K562 (cell line): ENCODE measurements at regions of chr12 and their contacts with region 1.

Region 1: DNA sequence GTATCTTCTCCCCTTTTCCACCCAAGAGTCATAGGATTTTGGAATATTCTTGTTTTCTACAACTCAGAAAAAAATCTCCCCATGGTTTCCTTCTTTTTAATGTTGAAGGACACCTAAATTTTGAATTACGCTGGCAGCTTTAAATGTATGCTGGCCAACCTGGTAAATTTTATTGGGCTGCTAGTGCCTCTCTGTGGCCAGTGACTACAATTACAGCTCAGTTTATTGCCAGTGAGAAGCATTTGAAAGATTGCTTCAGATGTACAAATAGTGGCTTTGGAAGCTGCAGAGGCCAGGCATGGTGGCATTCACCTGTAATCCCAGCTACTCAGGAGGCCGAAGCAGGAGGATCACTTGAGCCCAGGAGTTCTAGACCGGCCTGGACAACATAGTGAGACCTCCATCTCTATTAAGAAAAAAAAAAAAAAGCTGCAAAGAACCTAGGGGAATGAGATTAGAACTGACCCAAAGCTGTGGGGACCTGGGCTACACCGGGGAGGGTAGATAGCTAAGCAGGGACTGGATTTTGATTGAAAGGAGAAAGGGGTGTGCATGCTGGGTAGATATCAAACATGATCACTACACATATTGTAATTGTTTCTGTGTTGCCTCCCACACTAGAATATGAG is 7.6 kb upstream of the RAB21 start:
- DNase-seq: peak in 3 of 4 experiments; percentile 28 to 73 (median 45)
- ATAC-seq: peak; percentile 84
- H3K4me3 ChIP-seq: no peak overlapping the region
- H3K27ac ChIP-seq: no peak overlapping the region
- H3K4me1 ChIP-seq: peaks cover 3 to 10% of the 10 kb centered on the region in 2 experiments; a peak in 2 of 5 replicates
- H3K27me3 ChIP-seq: no peaks in the 10 kb centered on the region
- CTCF ChIP-seq: peak; percentile 69 to 89 (median 77)
- EP300 ChIP-seq: no peak
- POLR2A ChIP-seq: no peak
- RAD21 ChIP-seq: peak; percentile 88 to 91

Region 2: DNA sequence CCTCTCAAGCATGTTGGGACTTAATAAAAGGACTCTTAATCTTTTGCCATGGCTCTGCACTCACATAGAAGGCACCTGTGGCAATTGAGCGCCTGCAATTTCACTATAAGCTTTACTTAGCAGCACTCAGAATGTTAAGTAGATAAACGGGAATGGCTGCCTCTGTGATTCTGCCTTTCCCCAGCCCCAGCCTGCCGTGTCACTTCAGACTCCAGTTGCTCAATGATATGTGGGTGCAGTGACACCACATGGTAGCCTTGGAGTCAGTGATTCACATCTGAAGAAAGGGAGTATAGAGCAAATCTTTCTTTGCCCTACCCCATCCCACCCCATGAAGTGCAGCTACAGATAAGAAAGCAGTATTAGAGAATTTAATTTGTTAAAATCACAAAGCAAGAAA is 179.6 kb before region 1 on chr12:
- CTCF ChIA-PET with region 1: no interaction called
- POLR2A ChIA-PET with region 1: no interaction called
- in situ Hi-C with region 1: no loop called
- intact Hi-C with region 1: loop called (anchors 5 kb)
- DNase-seq: peak; percentile 18 to 74 (median 31)
- ATAC-seq: peak; percentile 95
- H3K4me3 ChIP-seq: no peak overlapping the region
- H3K27ac ChIP-seq: no peak overlapping the region
- H3K4me1 ChIP-seq: peaks cover 0 to 10% of the 10 kb centered on the region in 2 experiments; a peak in 4 of 5 replicates
- H3K27me3 ChIP-seq: no peaks in the 10 kb centered on the region
- CTCF ChIP-seq: peak; percentile 39 to 50 (median 48); a peak in 5 of 6 replicates
- EP300 ChIP-seq: no peak
- POLR2A ChIP-seq: no peak
- RAD21 ChIP-seq: peak; percentile 54 to 58

Region 3: GRCh38 chr12:71599210-71599609 is 147.9 kb before region 1 on chr12:
- CTCF ChIA-PET with region 1: no interaction called
- POLR2A ChIA-PET with region 1: no interaction called
- in situ Hi-C with region 1: no loop called
- intact Hi-C with region 1: no loop called
- DNase-seq: no peak
- ATAC-seq: no peak
- H3K4me3 ChIP-seq: no peak overlapping the region
- H3K27ac ChIP-seq: no peak overlapping the region
- H3K4me1 ChIP-seq: peaks cover 2 to 4% of the 10 kb centered on the region in 2 experiments; a peak in 3 of 5 replicates
- H3K27me3 ChIP-seq: no peaks in the 10 kb centered on the region
- CTCF ChIP-seq: no peak
- EP300 ChIP-seq: no peak
- POLR2A ChIP-seq: no peak
- RAD21 ChIP-seq: no peak

Region 4: DNA sequence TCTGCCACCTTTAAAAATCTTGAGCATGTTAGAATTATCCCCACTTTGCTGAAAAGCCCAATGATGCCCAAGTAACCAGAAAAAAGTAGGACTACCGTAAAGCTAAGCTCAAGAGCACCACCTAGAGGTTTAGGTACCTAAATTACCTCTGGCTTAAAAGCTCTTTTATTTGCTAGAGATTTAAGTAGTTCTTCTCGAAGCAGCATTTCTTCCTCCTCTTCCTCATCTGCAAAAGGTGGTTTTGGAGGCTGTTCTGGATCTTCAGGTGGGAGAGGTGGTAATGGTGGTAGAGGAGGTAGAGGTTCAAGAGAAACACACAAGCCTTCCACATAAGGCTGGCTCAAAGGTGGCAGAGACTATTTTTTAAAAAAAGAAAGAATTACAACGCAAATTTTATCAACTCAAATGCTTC is 110.4 kb before region 1 on chr12:
- CTCF ChIA-PET with region 1: interaction called, 8 read pairs
- POLR2A ChIA-PET with region 1: interaction called, 8 read pairs
- in situ Hi-C with region 1: loop called (anchors 10 kb)
- intact Hi-C with region 1: loop called (anchors 1 kb)
- DNase-seq: peak; percentile 42 to 70 (median 49)
- ATAC-seq: peak; percentile 66; the same call in 2 of the 3 replicates
- H3K4me3 ChIP-seq: no peak overlapping the region
- H3K27ac ChIP-seq: no peak overlapping the region
- H3K4me1 ChIP-seq: peaks cover 0 to 1% of the 10 kb centered on the region in 2 experiments; a peak in 2 of 5 replicates
- H3K27me3 ChIP-seq: no peaks in the 10 kb centered on the region
- CTCF ChIP-seq: peak; percentile 43 to 68 (median 66); a peak in 5 of 6 replicates
- EP300 ChIP-seq: no peak
- POLR2A ChIP-seq: no peak
- RAD21 ChIP-seq: peak; percentile 42 to 64; a peak in 3 of 4 replicates

Region 5: DNA sequence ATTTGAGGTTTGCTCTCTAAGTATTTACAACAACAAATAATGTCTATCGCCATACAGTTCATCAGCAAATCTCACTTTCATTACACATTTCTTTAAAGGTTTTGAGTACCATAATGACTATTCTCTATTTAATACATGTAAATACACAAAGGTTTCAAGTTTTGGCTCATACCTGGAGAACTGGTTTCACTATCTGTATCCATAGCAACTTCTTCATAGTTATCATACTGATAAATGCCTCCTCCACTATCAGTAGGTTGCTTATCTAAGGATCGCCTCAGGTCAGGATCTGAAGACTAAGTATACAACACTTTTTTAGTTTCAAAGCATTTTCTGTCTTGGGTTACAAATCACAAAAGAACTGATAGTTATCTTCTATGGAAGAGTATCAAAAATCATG is 104.8 kb before region 1 on chr12:
- CTCF ChIA-PET with region 1: interaction called, 8 read pairs
- POLR2A ChIA-PET with region 1: interaction called, 8 read pairs
- in situ Hi-C with region 1: loop called (anchors 10 kb)
- intact Hi-C with region 1: loop called (anchors 1 kb)
- DNase-seq: no peak
- ATAC-seq: no peak
- H3K4me3 ChIP-seq: no peak overlapping the region
- H3K27ac ChIP-seq: no peak overlapping the region
- H3K4me1 ChIP-seq: peaks cover 0 to 4% of the 10 kb centered on the region in 2 experiments; a peak in 2 of 5 replicates
- H3K27me3 ChIP-seq: no peaks in the 10 kb centered on the region
- CTCF ChIP-seq: no peak
- EP300 ChIP-seq: no peak
- POLR2A ChIP-seq: no peak
- RAD21 ChIP-seq: no peak

Region 6: GRCh38 chr12:71671816-71672215 is 75.3 kb before region 1 on chr12:
- CTCF ChIA-PET with region 1: no interaction called
- POLR2A ChIA-PET with region 1: no interaction called
- in situ Hi-C with region 1: no loop called
- intact Hi-C with region 1: no loop called
- DNase-seq: peak in 2 of 4 experiments; percentile 47 to 66
- ATAC-seq: peak; percentile 61
- H3K4me3 ChIP-seq: no peak overlapping the region
- H3K27ac ChIP-seq: peak overlapping the region; percentile 65
- H3K4me1 ChIP-seq: peaks cover 0 to 27% of the 10 kb centered on the region in 2 experiments; a peak in 2 of 5 replicates
- H3K27me3 ChIP-seq: no peaks in the 10 kb centered on the region
- CTCF ChIP-seq: no peak
- EP300 ChIP-seq: peak; percentile 77
- POLR2A ChIP-seq: no peak
- RAD21 ChIP-seq: no peak